ENCODE measurements at regions of chr2 and their contacts with region 1.

Region 1: GRCh38 chr2:159168707-159169106 is 117.8 kb downstream of the WDSUB1 start:
- DNase-seq: peak; percentile 15
- ATAC-seq: peak; percentile 54
- H3K4me3 ChIP-seq: no peak overlapping the region
- H3K27ac ChIP-seq: no peak overlapping the region
- H3K4me1 ChIP-seq: no peaks in the 10 kb centered on the region
- H3K27me3 ChIP-seq: no peaks in the 10 kb centered on the region
- CTCF ChIP-seq: peak; percentile 43; the same call in 1 of the 2 replicates

Region 2: GRCh38 chr2:159185401-159186130 is 16.9 kb after region 1 on chr2:
- CTCF ChIA-PET with region 1: no interaction called
- POLR2A ChIA-PET with region 1: no interaction called
- intact Hi-C with region 1: no loop called
- DNase-seq: peak; percentile 31
- ATAC-seq: peak; percentile 74
- H3K4me3 ChIP-seq: no peak overlapping the region
- H3K27ac ChIP-seq: no peak overlapping the region
- H3K4me1 ChIP-seq: no peaks in the 10 kb centered on the region
- H3K27me3 ChIP-seq: no peaks in the 10 kb centered on the region
- CTCF ChIP-seq: peak; percentile 63

Region 3: GRCh38 chr2:159366538-159366937 is 197.8 kb after region 1 on chr2:
- CTCF ChIA-PET with region 1: no interaction called
- POLR2A ChIA-PET with region 1: interaction called, 26 read pairs
- intact Hi-C with region 1: no loop called
- DNase-seq: no peak
- ATAC-seq: no peak
- H3K4me3 ChIP-seq: no peak overlapping the region
- H3K27ac ChIP-seq: no peak overlapping the region
- H3K4me1 ChIP-seq: no peaks in the 10 kb centered on the region
- H3K27me3 ChIP-seq: no peaks in the 10 kb centered on the region
- CTCF ChIP-seq: no peak